HCT116 (cell line): ENCODE measurements at regions of chr22 and their contacts with region 1.

Region 1: DNA sequence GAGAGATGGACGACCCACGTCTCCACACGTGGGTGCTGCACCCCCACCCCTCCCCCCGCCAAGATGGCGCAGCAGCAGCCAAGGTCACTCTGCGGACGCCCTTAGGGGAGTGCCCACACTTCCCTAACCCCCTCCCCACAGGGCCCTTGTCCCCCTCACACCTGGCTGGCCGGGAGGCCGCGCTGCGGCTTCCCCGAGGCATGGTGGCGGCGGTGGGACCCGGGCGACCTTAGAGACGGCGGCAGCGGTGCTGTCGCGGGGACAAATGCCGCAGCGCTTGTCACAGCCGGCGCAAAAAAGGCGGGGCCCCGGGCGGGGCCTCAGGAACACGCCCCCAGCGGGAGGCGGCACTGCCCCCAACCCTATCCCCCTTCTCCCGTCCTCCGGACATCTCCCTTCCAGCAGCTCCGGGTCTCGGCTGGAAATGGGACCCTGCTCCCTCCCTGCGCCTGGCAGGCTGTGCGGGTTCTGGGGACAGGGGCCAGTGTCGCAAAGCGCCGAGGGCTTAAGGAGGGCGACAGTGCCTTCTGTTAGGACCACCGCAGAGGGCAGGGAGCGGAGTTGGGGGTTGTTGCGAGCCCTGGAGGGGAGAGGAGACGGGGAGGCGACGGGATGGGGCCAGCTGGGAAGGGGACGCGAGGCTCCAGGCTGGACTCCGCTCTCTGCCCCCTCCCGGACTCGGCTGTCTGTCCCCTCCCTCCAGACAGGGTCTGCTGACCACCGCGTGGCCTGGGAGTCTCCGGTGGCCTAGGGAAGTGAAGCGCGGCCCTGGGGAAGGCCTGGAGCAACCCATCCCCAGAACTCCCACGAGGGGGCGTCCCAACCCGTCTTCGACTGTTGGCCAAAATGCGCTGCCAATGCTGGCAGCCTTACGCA is at the start of gene CHCHD10:
- DNase-seq: peak; percentile 60
- ATAC-seq: peak; percentile 76
- H3K4me3 ChIP-seq: peak within 1 kb of the TSS; percentile 73 to 86
- H3K27ac ChIP-seq: peak within 1 kb of the TSS; percentile 89
- H3K4me1 ChIP-seq: peaks cover 22 to 67% of the 10 kb centered on the region in 2 experiments
- H3K27me3 ChIP-seq: no peaks in the 10 kb centered on the region
- CTCF ChIP-seq: peak; percentile 55 to 79 (median 76); a peak in 5 of 6 replicates
- POLR2A ChIP-seq: peak; percentile 66
- RAD21 ChIP-seq: peak; percentile 70
- total RNA-seq, gene CHCHD10: 279 TPM

Region 2: DNA sequence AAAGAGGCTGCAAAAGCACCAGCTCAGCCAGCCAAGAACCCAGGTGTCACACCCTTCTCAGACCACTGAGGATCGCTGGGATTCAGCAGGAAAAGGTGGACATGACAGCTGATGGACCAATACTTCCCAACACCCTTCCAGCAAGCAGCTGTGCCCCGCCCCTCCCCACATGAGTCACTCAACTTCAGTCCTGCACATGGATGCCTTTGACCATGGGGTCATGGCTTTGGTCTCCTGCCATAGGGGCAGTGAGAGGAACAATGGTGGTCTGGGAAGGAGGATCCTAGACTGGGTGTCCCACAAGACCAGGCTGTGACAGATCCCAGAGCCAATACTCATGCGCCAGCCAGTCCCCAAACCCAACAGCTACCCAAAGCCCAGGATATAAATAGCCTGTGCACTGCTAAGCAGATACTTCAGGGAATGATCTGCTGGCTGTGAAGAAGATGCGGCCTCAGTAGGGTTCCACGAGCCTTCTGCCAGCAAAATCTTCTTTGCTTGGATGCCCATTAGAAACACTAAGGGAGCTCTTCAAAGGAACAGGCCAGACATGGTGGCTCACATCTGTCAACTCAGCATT is 82.6 kb before region 1 on chr22:
- CTCF ChIA-PET with region 1: no interaction called
- POLR2A ChIA-PET with region 1: no interaction called
- RAD21 ChIA-PET with region 1: no interaction called
- intact Hi-C with region 1: no loop called
- DNase-seq: no peak
- ATAC-seq: peak; percentile 40; the same call in 1 of the 2 replicates
- H3K4me3 ChIP-seq: no peak overlapping the region
- H3K27ac ChIP-seq: no peak overlapping the region
- H3K4me1 ChIP-seq: peaks cover 0 to 8% of the 10 kb centered on the region in 2 experiments; a peak in 1 of 4 replicates
- H3K27me3 ChIP-seq: no peaks in the 10 kb centered on the region
- CTCF ChIP-seq: no peak
- POLR2A ChIP-seq: no peak
- RAD21 ChIP-seq: no peak

Region 3: GRCh38 chr22:23786752-23787599 is 19.1 kb after region 1 on chr22 and contains the start of gene SMARCB1:
- CTCF ChIA-PET with region 1: interaction called, 6 read pairs
- POLR2A ChIA-PET with region 1: interaction called, 22 read pairs
- RAD21 ChIA-PET with region 1: no interaction called
- intact Hi-C with region 1: no loop called
- DNase-seq: peak; percentile 61
- ATAC-seq: peak; percentile 87
- H3K4me3 ChIP-seq: peak within 1 kb of the TSS; percentile 77 to 89
- H3K27ac ChIP-seq: peak within 1 kb of the TSS; percentile 98
- H3K4me1 ChIP-seq: peaks cover 15 to 27% of the 10 kb centered on the region in 2 experiments
- H3K27me3 ChIP-seq: no peaks in the 10 kb centered on the region
- CTCF ChIP-seq: no peak
- POLR2A ChIP-seq: peak; percentile 46
- RAD21 ChIP-seq: no peak
- total RNA-seq, gene SMARCB1: 101 TPM

Region 4: GRCh38 chr22:23849009-23850006 is 81.4 kb after region 1 on chr22:
- CTCF ChIA-PET with region 1: interaction called, 13 read pairs
- POLR2A ChIA-PET with region 1: no interaction called
- RAD21 ChIA-PET with region 1: interaction called, 4 read pairs
- intact Hi-C with region 1: loop called (anchors 5 kb)
- DNase-seq: peak; percentile 41
- ATAC-seq: peak; percentile 91
- H3K4me3 ChIP-seq: peak overlapping the region in 1 of 2 experiments; percentile 8; a peak in 1 of 4 replicates
- H3K27ac ChIP-seq: no peak overlapping the region; the same call in 1 of the 2 replicates
- H3K4me1 ChIP-seq: peaks cover 2 to 12% of the 10 kb centered on the region in 2 experiments; a peak in 2 of 4 replicates
- H3K27me3 ChIP-seq: no peaks in the 10 kb centered on the region
- CTCF ChIP-seq: peak; percentile 90 to 98 (median 94)
- POLR2A ChIP-seq: no peak
- RAD21 ChIP-seq: peak; percentile 98